Activated B cell treated with CpG ODN at 0.5 μM for 24 hours (primary cell): ENCODE measurements at regions of chr2 and their contacts with region 1.

Region 1: GRCh38 chr2:138787053-138787666 is 7.0 kb upstream of the NXPH2 start:
- DNase-seq: no peak
- ATAC-seq: no peak
- H3K4me3 Mint-ChIP-seq: no peak overlapping the region
- H3K27ac Mint-ChIP-seq: no peak overlapping the region
- H3K4me1 Mint-ChIP-seq: no peaks in the 10 kb centered on the region
- H3K27me3 Mint-ChIP-seq: peaks cover 11% of the 10 kb centered on the region
- CTCF ChIP-seq: no peak

Region 2: GRCh38 chr2:137910641-137911040 is 876.5 kb before region 1 on chr2:
- CTCF ChIA-PET with region 1: interaction called, 31 read pairs
- POLR2A ChIA-PET with region 1: no interaction called
- intact Hi-C with region 1: loop called (anchors 1 kb)
- DNase-seq: no peak
- ATAC-seq: no peak
- H3K4me3 Mint-ChIP-seq: no peak overlapping the region
- H3K27ac Mint-ChIP-seq: no peak overlapping the region
- H3K4me1 Mint-ChIP-seq: no peaks in the 10 kb centered on the region
- H3K27me3 Mint-ChIP-seq: peaks cover 2% of the 10 kb centered on the region
- CTCF ChIP-seq: no peak

Region 3: GRCh38 chr2:138090330-138090729 is 696.8 kb before region 1 on chr2:
- CTCF ChIA-PET with region 1: no interaction called
- POLR2A ChIA-PET with region 1: no interaction called
- intact Hi-C with region 1: loop called (anchors 10 kb)
- DNase-seq: no peak
- ATAC-seq: no peak
- H3K4me3 Mint-ChIP-seq: no peak overlapping the region
- H3K27ac Mint-ChIP-seq: no peak overlapping the region
- H3K4me1 Mint-ChIP-seq: no peaks in the 10 kb centered on the region
- H3K27me3 Mint-ChIP-seq: no peaks in the 10 kb centered on the region
- CTCF ChIP-seq: no peak

Region 4: GRCh38 chr2:138455275-138456052 is 331.7 kb before region 1 on chr2:
- CTCF ChIA-PET with region 1: no interaction called
- POLR2A ChIA-PET with region 1: no interaction called
- intact Hi-C with region 1: no loop called
- DNase-seq: no peak
- ATAC-seq: no peak
- H3K4me3 Mint-ChIP-seq: no peak overlapping the region
- H3K27ac Mint-ChIP-seq: no peak overlapping the region
- H3K4me1 Mint-ChIP-seq: no peaks in the 10 kb centered on the region
- H3K27me3 Mint-ChIP-seq: no peaks in the 10 kb centered on the region
- CTCF ChIP-seq: no peak

Region 5: GRCh38 chr2:138475277-138475776 is 311.8 kb before region 1 on chr2:
- CTCF ChIA-PET with region 1: interaction called, 9 read pairs
- POLR2A ChIA-PET with region 1: no interaction called
- intact Hi-C with region 1: loop called (anchors 1 kb)
- DNase-seq: no peak
- ATAC-seq: peak; percentile 76
- H3K4me3 Mint-ChIP-seq: peak overlapping the region; percentile 36
- H3K27ac Mint-ChIP-seq: peak overlapping the region; percentile 51
- H3K4me1 Mint-ChIP-seq: peaks cover 27% of the 10 kb centered on the region
- H3K27me3 Mint-ChIP-seq: no peaks in the 10 kb centered on the region
- CTCF ChIP-seq: no peak

Region 6: DNA sequence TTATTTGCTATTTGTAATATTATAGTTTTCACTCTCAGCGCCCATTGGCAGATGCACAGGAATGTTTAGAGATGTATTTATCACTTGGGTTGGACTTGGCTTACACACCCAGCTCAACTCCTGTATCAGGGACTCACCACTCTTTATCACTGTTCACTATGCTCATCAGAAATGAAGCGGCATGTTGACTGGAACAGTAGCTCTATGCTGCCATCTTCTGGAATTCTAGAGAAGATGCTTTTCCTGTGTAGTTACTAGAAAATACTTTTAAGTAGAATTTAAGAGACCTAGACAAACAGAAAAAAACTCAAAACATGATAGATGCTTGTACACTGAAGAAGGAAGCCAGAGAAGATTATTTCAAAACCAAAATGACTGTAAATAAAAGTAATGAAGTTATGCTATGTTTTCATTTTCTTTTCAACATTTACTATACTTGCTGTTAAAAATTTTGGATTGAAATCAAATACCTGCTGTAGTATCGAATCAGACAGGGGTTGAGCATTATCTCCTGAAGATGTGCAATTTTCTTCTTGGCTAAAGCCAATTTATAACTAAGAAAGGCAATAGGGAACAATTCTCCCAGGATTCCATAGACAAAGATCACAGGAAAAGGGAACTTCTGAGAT is 40.4 kb after region 1 on chr2:
- CTCF ChIA-PET with region 1: interaction called, 17 read pairs
- POLR2A ChIA-PET with region 1: no interaction called
- intact Hi-C with region 1: loop called (anchors 2 kb)
- DNase-seq: no peak
- ATAC-seq: peak; percentile 37
- H3K4me3 Mint-ChIP-seq: no peak overlapping the region
- H3K27ac Mint-ChIP-seq: no peak overlapping the region
- H3K4me1 Mint-ChIP-seq: no peaks in the 10 kb centered on the region
- H3K27me3 Mint-ChIP-seq: peaks cover 8% of the 10 kb centered on the region
- CTCF ChIP-seq: peak; percentile 54